ENCODE measurements at regions of chr20 and their contacts with region 1.

Region 1: DNA sequence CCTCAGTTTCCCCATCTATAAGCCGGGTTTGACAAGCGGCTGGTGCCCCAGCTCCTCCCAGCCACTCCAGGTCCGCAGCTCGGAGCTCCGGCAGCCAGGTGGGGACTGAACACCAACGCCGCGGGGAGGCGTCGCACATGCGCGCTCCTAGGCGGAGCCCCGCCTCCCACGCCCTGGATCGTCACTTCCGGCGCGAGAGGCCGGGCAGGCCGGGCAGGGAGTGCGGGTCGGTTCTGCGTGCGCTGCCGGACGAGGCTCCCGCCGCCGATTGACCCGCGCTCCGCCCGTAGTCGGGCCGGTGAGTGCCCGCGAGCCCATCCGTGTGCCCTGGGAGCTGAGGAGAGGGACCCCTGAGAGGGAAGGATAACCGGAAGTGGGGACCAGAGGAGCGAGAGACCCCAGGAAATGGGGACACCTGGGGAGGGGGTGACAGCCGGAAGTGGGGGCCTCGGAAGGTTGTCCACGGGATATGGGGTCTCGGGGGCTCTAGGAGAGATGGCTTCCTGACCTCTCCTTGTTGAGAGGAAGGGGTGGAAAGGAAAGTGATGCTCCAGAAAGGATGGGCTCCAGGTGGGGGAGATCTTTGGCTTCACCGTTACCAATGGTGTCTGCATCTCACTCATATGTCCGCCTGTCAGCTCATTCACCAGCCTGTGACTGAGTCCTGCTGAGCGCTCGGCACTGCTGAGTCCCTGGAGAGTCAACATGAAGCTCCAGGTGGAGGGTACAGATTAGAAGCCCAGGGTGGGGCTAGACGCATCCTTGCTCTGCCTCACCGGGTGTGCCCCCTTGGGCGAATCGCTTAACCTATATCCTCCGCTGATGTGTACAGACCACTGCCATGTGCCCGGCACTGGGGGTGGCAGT is at the start of gene TTPAL:
- DNase-seq: peak; percentile 94
- H3K4me3 Mint-ChIP-seq: peak within 1 kb of the TSS; percentile 94
- H3K27ac Mint-ChIP-seq: peak within 1 kb of the TSS; percentile 93
- H3K4me1 Mint-ChIP-seq: peaks cover 22% of the 10 kb centered on the region
- H3K27me3 Mint-ChIP-seq: no peaks in the 10 kb centered on the region
- total RNA-seq, gene TTPAL: 18.1 to 18.6 TPM

Region 2: GRCh38 chr20:44532259-44532980 is 56.5 kb after region 1 on chr20:
- CTCF ChIA-PET with region 1: no interaction called
- POLR2A ChIA-PET with region 1: interaction called, 4 read pairs
- intact Hi-C with region 1: loop called (anchors 2 kb)
- DNase-seq: no peak
- H3K4me3 Mint-ChIP-seq: no peak overlapping the region
- H3K27ac Mint-ChIP-seq: no peak overlapping the region
- H3K4me1 Mint-ChIP-seq: peaks cover 3% of the 10 kb centered on the region
- H3K27me3 Mint-ChIP-seq: peaks cover 2% of the 10 kb centered on the region

Region 3: DNA sequence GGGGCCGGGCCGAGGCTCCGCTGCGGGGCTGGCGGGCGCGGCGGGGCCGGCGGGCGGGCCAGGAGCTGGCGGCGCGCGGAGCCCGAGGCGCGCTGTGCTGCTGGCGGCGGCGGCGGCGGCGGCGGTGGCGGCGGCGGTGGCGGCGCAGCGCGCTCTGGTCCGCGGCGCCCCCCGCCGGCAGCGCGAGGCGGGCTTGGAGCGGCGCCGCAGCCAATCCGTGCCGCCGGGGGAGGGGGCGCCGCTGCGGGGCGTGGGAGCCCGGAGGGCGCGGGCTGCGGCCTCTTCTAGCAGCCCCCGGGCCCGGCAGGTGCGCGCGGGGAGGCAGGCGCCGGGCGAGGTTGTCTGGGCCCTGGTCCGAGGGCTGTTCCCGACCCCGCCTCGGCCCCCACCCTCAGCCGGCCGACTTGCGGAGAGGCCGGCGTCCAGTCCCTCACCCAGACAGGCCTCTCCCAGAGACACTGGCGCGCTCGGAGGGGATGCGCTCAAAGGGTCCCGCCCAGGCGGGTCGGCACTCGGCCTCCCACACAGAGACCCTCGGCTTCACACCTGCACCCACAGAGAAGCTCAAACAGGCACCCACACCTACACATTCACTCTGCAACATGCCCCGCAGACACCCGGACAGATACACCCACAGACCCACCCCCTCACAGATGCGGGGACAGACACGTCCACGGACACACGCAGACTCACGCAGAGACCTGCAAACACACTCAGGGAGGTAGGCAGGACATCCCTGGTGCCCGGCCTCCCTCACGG is 334.6 kb after region 1 on chr20 and contains the start of gene RIMS4:
- CTCF ChIA-PET with region 1: no interaction called
- POLR2A ChIA-PET with region 1: no interaction called
- intact Hi-C with region 1: no loop called
- DNase-seq: no peak
- H3K4me3 Mint-ChIP-seq: peak within 1 kb of the TSS; percentile 20
- H3K27ac Mint-ChIP-seq: no peak within 1 kb of the TSS
- H3K4me1 Mint-ChIP-seq: peaks cover 5% of the 10 kb centered on the region
- H3K27me3 Mint-ChIP-seq: peaks cover 50% of the 10 kb centered on the region
- total RNA-seq, gene RIMS4: not detected